Kidney (tissue), 22 donors: ENCODE measurements at regions of chr18 and their contacts with region 1.

Region 1: DNA sequence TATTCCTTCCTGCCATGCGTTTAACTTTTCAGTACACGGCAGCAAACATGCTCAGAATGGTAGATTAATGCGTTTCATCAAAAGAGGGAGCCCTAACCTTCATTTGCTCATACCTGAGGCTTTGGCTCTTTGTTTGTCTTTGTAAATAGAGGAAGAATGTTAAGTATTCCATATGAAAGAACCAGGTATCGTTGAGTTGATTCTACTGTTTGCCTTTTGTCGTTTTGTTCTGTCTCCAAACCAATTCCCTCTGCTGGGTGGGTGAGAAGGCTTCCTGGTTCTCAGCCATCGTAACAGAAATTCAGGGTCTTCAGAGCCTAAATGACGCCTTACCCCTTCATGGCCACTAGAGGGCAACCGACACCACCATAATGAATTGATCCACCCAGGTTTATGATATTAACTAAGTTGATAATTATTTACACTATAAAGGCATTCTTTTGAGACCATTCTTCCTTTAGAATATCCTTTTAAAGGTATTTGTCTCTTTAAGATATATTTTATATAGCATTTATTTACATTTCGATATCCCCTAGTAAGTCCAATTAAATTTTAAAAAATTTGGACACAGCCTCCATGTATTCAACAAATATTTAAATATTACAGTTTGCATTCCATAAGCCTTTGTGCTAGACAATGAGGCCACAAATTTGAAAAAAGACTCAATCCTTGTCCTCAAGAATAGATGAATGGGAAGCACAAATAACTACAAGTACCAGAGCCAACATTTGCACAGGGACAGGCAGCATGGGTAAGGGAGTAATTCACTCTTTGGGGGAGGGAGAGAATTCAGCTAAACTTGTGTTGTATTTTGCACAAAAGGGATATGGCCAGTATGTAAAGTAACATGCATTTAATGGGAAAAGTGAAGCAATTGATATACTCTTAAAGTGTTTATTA is 48.1 kb downstream of the TIMM21 start:
- DNase-seq: peak in 4 of 5 donors; percentile 60 to 89 (median 77)
- H3K4me3 ChIP-seq: peak overlapping the region; percentile 67 to 81 (median 74)
- H3K27ac ChIP-seq: peak overlapping the region; percentile 51 to 54
- H3K4me1 ChIP-seq: peaks cover 0 to 13% (median 10%) of the 10 kb centered on the region in 3 donors
- H3K27me3 ChIP-seq: no peaks in the 10 kb centered on the region
- CTCF ChIP-seq: peak; percentile 95

Region 2: DNA sequence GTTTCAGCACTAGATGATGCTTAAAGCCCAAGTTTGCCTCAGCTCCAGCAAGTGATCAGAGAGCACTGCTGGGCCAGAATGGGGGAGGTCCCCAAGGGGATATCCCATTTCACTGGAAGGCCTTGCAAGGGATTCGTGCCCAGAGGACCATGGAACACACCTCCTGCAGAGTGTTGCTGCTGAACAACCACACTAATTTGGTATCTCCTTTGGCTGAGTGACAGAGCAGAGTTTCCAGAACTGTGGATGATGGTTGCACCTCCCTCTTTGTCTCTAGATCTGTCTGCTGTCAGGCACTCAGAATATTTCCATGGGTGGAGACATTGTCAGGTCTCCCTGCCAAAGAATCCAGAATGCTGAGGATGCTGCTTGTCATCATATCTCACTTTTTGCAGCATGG is 843.9 kb before region 1 on chr18:
- intact Hi-C with region 1: no loop called
- DNase-seq: peak in 4 of 5 donors; percentile 52 to 64 (median 56)
- H3K4me3 ChIP-seq: no peak overlapping the region
- H3K27ac ChIP-seq: no peak overlapping the region
- H3K4me1 ChIP-seq: no peaks in the 10 kb centered on the region
- H3K27me3 ChIP-seq: no peaks in the 10 kb centered on the region
- CTCF ChIP-seq: no peak

Region 3: DNA sequence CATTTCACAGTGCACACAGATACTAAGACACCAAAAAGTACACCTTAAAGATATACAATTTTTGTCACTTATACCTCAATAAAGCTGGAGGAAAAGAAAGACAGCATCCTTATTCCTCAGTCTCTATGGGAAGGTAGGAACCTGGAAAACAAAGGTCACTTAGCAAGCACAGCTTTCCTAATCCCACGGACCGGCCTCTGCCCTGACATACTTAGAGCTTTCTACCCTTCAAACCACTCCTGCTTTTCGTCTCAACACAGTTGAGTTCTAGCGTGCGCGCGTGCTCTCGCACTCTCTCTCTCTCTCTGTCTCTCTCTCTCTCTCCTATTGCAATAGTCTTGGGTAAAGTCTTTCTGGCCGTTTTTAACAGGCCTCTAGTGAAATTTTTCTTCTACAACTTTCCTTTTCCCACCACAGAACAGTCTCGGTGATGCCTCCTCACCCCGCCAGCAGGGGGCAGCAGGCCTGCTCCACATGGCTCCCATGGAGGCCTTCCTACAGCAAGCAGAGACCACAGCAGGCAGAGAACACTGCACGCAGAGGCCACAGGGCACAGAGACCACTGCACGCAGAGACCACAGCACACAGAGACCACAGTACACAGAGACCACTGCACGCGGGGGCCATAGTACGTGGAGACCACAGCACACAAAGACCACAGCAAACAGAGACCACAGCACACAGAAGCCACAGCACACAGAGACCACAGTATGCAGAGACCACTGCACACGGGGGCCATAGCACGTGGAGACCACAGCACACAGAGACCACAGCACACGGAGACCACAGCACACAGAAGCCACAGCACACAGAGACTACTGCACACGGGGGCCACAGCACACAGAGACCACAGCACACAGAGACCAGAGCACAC is 155.8 kb before region 1 on chr18:
- intact Hi-C with region 1: no loop called
- DNase-seq: no peak
- H3K4me3 ChIP-seq: no peak overlapping the region
- H3K27ac ChIP-seq: no peak overlapping the region
- H3K4me1 ChIP-seq: no peaks in the 10 kb centered on the region
- H3K27me3 ChIP-seq: no peaks in the 10 kb centered on the region
- CTCF ChIP-seq: peak; percentile 53

Region 4: GRCh38 chr18:74342416-74343043 is 146.1 kb after region 1 on chr18:
- intact Hi-C with region 1: loop called (anchors 5 kb)
- DNase-seq: peak in 3 of 5 donors; percentile 29 to 85 (median 85)
- H3K4me3 ChIP-seq: no peak overlapping the region
- H3K27ac ChIP-seq: no peak overlapping the region
- H3K4me1 ChIP-seq: no peaks in the 10 kb centered on the region
- H3K27me3 ChIP-seq: no peaks in the 10 kb centered on the region
- CTCF ChIP-seq: peak; percentile 47